MCF 10A (cell line): ENCODE measurements at regions of chr1 and their contacts with region 1.

Region 1: GRCh38 chr1:187476671-187477070 is 647.9 kb downstream of the PLA2G4A start:
- DNase-seq: peak; percentile 44
- H3K4me3 Mint-ChIP-seq: no peak overlapping the region
- H3K27ac Mint-ChIP-seq: no peak overlapping the region
- H3K4me1 Mint-ChIP-seq: peaks cover 6% of the 10 kb centered on the region
- H3K27me3 Mint-ChIP-seq: no peaks in the 10 kb centered on the region
- CTCF ChIP-seq: peak; percentile 42

Region 2: DNA sequence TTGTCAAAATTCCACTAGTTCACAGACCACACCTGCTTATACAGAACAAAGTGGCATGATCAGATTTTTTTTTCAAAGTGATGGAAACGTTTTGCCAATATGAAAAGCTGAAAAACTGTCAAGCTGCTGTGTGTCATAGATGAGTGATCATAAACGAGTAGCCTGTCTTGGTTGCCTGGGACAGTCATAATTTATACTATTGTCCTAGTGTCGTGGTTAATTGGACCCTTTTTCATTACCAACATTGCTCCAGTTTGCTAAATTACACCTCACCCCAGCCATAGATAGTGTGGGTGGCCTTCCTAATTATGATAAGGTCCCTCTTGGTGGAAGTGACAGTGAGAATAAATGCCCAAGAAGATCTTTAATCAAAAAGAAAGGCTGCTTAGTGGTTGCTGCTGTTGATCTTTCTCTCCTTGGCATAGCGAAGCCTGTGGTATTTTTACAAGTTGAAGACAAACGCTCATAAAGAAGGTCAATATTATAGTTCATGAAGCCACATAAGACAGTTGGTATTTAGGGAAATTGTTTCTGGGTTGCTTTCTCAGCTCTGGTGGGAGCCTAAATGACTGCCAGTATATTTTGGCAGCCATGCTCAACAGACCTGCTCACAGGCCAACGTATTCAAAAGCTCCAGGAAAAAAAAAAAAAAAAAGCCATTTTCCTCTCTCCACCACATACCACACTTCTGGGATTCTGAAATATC is 169.8 kb before region 1 on chr1:
- CTCF ChIA-PET with region 1: no interaction called
- POLR2A ChIA-PET with region 1: no interaction called
- intact Hi-C with region 1: no loop called
- DNase-seq: no peak
- H3K4me3 Mint-ChIP-seq: no peak overlapping the region
- H3K27ac Mint-ChIP-seq: no peak overlapping the region
- H3K4me1 Mint-ChIP-seq: no peaks in the 10 kb centered on the region
- H3K27me3 Mint-ChIP-seq: no peaks in the 10 kb centered on the region
- CTCF ChIP-seq: no peak

Region 3: GRCh38 chr1:187381439-187381838 is 95.2 kb before region 1 on chr1:
- CTCF ChIA-PET with region 1: no interaction called
- POLR2A ChIA-PET with region 1: no interaction called
- intact Hi-C with region 1: no loop called
- DNase-seq: no peak
- H3K4me3 Mint-ChIP-seq: no peak overlapping the region
- H3K27ac Mint-ChIP-seq: no peak overlapping the region
- H3K4me1 Mint-ChIP-seq: no peaks in the 10 kb centered on the region
- H3K27me3 Mint-ChIP-seq: no peaks in the 10 kb centered on the region
- CTCF ChIP-seq: no peak

Region 4: DNA sequence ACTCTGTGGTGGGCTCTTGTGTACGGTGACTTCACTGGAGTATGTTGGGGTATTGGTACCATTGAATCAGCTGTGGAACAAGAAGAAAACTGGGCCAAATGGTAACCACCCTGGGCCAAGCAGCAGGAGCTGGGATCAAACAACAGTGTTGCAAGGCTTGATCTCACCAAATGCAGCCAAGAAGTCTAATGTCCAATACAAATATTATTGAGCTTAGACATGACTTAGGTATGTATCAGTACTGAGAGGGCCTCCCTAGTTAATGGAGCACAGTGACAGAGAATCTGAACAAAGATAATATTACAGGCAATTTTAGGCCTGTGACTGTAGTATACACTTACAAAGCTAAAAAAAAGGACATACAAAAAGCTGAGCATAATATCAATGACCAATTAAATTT is 43.1 kb before region 1 on chr1:
- CTCF ChIA-PET with region 1: no interaction called
- POLR2A ChIA-PET with region 1: no interaction called
- intact Hi-C with region 1: no loop called
- DNase-seq: no peak
- H3K4me3 Mint-ChIP-seq: no peak overlapping the region
- H3K27ac Mint-ChIP-seq: no peak overlapping the region
- H3K4me1 Mint-ChIP-seq: no peaks in the 10 kb centered on the region
- H3K27me3 Mint-ChIP-seq: no peaks in the 10 kb centered on the region
- CTCF ChIP-seq: no peak

Region 5: DNA sequence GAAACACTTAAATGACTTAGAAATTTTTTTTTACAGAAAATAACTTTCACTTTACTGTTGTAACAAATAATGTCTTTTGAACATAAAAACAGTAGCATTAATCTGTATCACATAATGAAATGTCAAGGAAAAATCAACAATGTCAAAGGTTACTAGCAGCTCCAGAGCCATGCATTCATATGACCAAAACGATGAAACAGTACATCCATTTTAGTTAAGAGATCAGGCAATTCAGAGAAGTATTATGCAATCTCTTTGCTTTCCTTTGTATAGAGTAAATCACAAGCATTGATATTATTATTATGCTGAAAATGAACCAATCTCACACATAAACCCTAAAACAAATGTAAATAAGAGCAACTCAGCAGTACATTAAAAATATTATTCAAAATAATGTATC is 100.9 kb after region 1 on chr1:
- CTCF ChIA-PET with region 1: no interaction called
- POLR2A ChIA-PET with region 1: no interaction called
- intact Hi-C with region 1: no loop called
- DNase-seq: no peak
- H3K4me3 Mint-ChIP-seq: no peak overlapping the region
- H3K27ac Mint-ChIP-seq: no peak overlapping the region
- H3K4me1 Mint-ChIP-seq: no peaks in the 10 kb centered on the region
- H3K27me3 Mint-ChIP-seq: no peaks in the 10 kb centered on the region
- CTCF ChIP-seq: no peak

Region 6: DNA sequence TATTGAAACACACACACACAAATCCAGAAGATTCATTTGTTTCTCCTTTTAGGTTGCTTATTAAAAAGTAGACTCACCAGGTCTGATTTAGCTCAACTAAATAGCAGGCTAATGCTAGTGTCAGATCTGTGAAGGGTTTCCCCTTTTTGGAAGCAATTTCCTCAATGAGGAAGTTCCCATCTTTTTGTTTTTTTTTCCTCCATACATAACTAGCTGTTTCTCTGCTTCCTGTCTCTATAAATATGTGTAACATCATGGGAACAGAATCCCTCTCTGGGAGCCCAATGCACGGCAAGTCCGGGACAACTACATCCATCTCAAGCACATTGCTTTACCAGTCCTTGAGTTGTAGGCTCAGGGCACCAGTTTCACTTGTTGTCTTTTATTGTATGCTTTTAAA is 773.1 kb after region 1 on chr1:
- CTCF ChIA-PET with region 1: no interaction called
- POLR2A ChIA-PET with region 1: no interaction called
- intact Hi-C with region 1: loop called (anchors 10 kb)
- DNase-seq: no peak
- H3K4me3 Mint-ChIP-seq: no peak overlapping the region
- H3K27ac Mint-ChIP-seq: no peak overlapping the region
- H3K4me1 Mint-ChIP-seq: no peaks in the 10 kb centered on the region
- H3K27me3 Mint-ChIP-seq: no peaks in the 10 kb centered on the region
- CTCF ChIP-seq: no peak